AG04449 (cell line): ENCODE measurements at regions of chr2 and their contacts with region 1.

Region 1: GRCh38 chr2:30711646-30712085 is 95.6 kb downstream of the CAPN13 start:
- DNase-seq: peak; percentile 49
- H3K4me3 ChIP-seq: no peak overlapping the region
- CTCF ChIP-seq: peak; percentile 98

Region 2: DNA sequence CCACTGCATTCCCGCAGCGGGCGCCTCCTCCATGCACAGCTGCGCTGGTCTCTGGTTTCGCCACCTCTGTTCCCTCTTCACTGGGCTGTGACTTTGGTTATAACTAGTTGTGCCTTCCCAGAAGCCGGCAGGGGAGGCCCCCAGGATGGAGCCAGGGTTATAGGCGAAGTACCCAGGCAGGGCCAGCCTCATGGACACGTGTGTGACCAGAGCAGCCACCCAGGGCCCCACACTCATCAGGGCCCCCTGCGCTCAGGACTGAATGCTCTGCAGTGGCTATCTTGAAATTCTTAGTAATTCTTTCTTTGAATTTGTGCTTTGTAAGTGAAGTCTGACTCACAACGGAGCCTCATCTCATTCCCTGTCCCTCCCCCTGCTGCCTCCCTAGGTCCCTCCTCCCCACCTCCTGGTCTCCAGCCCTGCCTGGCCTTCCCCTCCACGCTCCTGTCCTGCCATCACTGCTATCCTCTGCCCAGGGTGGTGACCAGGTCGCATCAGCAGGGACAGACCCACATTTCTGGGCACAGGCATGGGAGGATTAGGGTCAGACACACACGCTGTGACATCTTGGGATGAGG is 518.5 kb before region 1 on chr2:
- CTCF ChIA-PET with region 1: interaction called, 14 read pairs
- POLR2A ChIA-PET with region 1: no interaction called
- DNase-seq: no peak
- H3K4me3 ChIP-seq: no peak overlapping the region
- CTCF ChIP-seq: no peak

Region 3: DNA sequence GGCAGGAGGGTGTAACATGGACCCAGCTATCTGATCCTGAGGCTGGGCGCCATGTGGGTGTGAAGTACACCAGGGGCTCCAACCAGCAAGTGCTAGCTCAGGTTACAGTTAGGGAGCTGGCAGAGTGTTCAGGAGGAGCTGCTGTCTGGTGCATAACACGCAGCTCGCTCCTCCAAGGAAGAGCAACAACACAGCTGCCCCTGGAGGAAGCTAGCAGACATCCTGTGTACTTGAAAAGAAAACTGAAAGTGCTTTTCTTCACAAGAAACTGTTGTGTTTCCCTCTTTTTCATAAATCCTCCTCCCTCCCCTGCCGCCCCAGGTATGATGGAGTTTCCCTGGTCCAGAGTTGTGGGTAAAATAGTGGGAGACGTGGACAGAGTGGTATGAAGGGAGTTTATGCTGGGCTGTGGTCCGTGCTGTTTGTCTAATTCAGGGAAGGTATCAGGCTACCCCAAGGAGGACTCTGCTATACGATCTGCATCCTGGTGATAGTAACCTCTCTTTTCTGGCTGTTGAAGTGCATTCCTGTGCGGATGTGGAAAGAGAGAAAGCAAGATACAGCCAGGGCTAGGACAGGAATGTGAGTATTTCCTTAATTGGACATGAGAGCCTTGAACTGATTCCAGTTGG is 486.4 kb before region 1 on chr2:
- CTCF ChIA-PET with region 1: interaction called, 24 read pairs
- POLR2A ChIA-PET with region 1: no interaction called
- DNase-seq: peak; percentile 65
- H3K4me3 ChIP-seq: peak overlapping the region; percentile 53
- CTCF ChIP-seq: no peak

Region 4: GRCh38 chr2:30421604-30422443 is 289.8 kb before region 1 on chr2:
- CTCF ChIA-PET with region 1: interaction called, 11 read pairs
- POLR2A ChIA-PET with region 1: no interaction called
- DNase-seq: peak; percentile 75
- H3K4me3 ChIP-seq: peak overlapping the region; percentile 40
- CTCF ChIP-seq: no peak

Region 5: DNA sequence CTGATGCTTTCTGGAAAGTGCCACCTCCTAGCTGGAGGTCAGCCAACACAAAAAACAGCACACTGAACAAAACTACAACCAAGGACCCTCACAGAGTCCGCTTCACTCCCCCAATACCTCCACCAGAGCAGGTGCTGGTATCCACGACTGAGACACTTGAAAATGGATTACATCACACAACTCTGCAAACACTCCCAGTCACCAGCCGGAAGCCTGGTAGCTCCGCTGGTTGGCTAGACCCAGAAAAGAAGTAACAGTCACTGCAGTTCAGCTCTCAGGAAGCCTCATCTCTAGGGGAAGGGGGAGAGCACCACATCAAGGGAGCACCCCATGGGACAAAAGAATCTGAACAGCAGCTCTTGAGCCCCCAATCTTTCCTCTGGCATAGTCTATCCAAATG is 89.2 kb before region 1 on chr2:
- CTCF ChIA-PET with region 1: no interaction called
- POLR2A ChIA-PET with region 1: no interaction called
- DNase-seq: no peak
- H3K4me3 ChIP-seq: no peak overlapping the region
- CTCF ChIP-seq: no peak

Region 6: DNA sequence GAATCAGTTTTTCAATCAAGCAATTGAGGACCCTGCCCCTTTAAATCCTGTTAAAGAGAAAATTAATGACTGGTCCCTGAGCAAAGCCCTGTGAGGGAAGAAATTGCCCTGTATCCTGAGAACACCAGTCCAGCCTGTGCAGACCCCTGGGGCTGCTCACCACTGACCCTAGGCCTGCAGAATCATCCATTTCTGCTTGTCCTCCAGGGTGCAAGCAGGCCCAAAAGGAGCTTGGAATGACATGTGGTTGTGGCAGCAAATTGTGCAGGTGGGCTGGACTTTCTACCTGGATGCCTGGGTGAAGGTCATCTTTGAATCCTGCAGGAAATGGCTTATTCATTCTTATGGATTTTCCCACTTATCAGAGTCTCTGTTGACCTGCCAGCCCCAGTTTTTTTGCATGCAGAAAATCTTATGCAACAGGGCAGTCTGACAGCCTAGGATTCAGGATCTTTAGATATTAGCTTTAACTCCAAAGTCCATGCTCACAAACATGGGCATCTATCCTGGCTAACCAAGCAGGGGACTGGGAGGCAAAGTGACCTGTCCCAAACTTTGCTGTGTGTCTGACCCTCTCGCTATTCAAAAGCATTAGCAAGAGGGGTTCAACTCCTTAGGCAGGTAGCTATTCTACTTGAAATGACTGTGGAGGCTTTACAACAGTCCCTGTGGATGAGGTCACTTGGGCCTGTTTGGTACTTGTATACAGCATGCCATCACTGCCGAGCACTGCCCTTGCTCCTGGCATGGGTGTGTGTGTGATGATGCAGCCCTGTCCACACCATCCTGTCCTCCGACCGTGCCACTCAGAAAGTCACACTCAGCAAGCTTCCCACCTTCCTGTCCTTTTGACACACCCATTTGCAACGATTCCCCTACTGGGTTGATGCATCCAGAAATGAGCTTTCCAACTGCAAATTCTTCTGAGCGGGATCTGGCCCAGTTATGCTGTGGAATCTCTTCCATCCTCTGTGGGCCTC is 10.3 kb after region 1 on chr2:
- CTCF ChIA-PET with region 1: interaction called, 59 read pairs
- POLR2A ChIA-PET with region 1: no interaction called
- DNase-seq: no peak
- H3K4me3 ChIP-seq: no peak overlapping the region
- CTCF ChIP-seq: no peak

Region 7: DNA sequence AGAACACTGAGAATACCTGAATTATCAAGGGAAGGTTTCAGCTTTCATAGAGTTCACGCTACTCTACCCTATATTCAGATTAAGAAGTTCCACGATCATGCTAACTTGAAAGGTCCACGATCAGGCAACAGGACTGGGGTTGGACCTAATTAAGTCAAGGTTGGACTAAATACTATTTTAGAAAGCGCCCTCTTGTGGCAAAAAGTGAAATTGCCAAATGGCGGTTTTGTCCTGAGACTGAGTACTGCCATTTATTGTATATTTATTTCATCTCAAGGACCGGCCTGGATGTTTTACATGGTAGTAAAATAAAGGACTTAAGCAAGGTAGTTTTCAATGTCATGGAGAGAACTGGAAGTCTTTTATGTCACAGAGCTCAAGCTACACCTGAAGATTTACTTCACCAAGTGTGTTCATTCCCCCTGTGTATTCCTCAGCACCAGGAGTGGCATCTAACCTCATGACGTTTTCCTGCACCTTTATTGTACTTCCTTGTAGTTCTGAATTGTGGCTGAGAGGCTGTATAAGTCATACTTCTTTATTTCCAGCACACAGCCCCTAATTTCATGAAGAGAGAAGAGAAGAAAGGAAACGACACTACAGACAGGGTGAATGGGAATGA is 812.3 kb after region 1 on chr2:
- CTCF ChIA-PET with region 1: interaction called, 14 read pairs
- POLR2A ChIA-PET with region 1: no interaction called
- DNase-seq: no peak
- H3K4me3 ChIP-seq: no peak overlapping the region
- CTCF ChIP-seq: peak; percentile 50